ENCODE measurements at regions of chr10 and their contacts with region 1.

Region 1: DNA sequence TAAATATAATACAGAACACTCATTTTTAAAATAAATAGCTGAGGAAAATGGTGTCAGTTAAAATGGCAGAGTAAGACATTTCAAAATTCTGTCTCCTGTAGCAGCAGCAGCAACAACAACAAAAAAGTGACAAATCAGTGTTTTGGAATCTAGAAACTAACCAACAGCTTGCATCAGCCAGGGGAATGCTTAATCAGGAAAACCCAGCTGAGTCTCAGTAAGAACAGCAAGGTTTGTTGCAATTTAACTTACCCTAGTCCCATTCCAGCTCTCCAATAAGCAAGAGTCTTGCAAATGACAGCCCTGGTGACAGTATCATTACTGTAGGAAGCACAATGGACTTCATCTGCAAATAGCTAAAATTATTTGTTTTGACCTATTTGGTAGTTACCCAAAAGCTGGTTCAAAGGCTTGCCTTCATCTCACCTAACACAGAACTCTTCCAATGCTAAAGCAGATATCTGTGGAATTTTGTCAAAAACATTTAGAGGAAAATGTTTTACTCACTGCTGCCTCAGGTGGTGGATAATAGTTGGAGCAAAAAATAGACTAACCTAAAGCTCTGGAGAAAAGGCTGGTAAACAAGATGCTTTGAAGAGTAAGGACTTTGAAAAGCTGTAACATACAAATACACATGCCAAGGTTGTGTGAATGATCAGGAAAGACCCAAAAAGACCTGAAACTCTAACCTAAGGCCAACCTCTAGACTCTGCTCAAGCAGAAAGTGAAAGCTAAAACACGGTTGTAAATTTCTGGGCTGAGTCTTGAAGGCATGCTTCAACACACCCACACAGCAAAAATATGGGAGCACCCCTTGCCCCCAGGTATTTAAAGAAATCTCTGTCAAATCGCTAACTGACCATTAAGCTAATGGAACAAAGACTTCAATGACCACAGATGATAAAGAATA is 9.9 kb upstream of the ARHGAP22 start:
- DNase-seq: peak in 1 of 2 experiments; percentile 33
- H3K4me3 ChIP-seq: no peak overlapping the region
- H3K27ac ChIP-seq: no peak overlapping the region
- H3K4me1 ChIP-seq: no peaks in the 10 kb centered on the region
- H3K27me3 ChIP-seq: no peaks in the 10 kb centered on the region; a peak in 1 of 7 replicates
- CTCF ChIP-seq: peak in 1 of 3 experiments; percentile 29; a peak in 1 of 4 replicates
- EP300 ChIP-seq: no peak
- POLR2A ChIP-seq: no peak
- RAD21 ChIP-seq: peak in 1 of 2 experiments; percentile 9; a peak in 1 of 4 replicates

Region 2: GRCh38 chr10:48274636-48275035 is 340.1 kb before region 1 on chr10 and contains the start of gene FRMPD2:
- CTCF ChIA-PET with region 1: no interaction called
- POLR2A ChIA-PET with region 1: no interaction called
- DNase-seq: no peak
- H3K4me3 ChIP-seq: no peak within 1 kb of the TSS
- H3K27ac ChIP-seq: no peak within 1 kb of the TSS; the same call in 1 of the 2 replicates
- H3K4me1 ChIP-seq: peaks cover 0 to 7% (median 1%) of the 10 kb centered on the region in 4 experiments; a peak in 2 of 7 replicates
- H3K27me3 ChIP-seq: no peaks in the 10 kb centered on the region
- CTCF ChIP-seq: no peak
- EP300 ChIP-seq: no peak
- POLR2A ChIP-seq: no peak
- RAD21 ChIP-seq: no peak
- total RNA-seq, gene FRMPD2: 0.07 and 0.10 TPM in 2 replicates

Region 3: DNA sequence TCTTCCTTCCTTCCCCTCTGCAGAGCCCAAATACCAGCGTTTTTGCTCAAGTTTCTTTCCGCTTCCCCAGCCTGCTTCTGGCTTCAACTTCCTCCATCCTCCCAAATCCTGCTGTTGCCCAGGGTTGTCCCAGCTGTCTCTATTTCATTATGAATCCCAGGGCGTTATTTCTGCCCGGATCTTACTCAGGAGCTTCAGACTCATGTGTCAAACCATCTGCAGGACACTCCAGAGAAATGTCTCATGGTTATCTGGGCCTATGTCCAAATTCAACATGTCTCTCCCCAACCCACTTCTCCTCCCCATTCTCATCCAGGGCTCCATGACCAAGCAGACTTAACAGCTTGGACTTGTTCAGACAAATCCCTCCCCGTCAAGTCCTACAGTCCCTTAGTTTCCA is 25.5 kb before region 1 on chr10:
- CTCF ChIA-PET with region 1: interaction called, 172 read pairs
- POLR2A ChIA-PET with region 1: no interaction called
- DNase-seq: no peak
- H3K4me3 ChIP-seq: no peak overlapping the region
- H3K27ac ChIP-seq: no peak overlapping the region
- H3K4me1 ChIP-seq: peaks cover 0 to 4% (median 3%) of the 10 kb centered on the region in 4 experiments; a peak in 5 of 7 replicates
- H3K27me3 ChIP-seq: no peaks in the 10 kb centered on the region
- CTCF ChIP-seq: no peak
- EP300 ChIP-seq: no peak
- POLR2A ChIP-seq: no peak
- RAD21 ChIP-seq: no peak

Region 4: DNA sequence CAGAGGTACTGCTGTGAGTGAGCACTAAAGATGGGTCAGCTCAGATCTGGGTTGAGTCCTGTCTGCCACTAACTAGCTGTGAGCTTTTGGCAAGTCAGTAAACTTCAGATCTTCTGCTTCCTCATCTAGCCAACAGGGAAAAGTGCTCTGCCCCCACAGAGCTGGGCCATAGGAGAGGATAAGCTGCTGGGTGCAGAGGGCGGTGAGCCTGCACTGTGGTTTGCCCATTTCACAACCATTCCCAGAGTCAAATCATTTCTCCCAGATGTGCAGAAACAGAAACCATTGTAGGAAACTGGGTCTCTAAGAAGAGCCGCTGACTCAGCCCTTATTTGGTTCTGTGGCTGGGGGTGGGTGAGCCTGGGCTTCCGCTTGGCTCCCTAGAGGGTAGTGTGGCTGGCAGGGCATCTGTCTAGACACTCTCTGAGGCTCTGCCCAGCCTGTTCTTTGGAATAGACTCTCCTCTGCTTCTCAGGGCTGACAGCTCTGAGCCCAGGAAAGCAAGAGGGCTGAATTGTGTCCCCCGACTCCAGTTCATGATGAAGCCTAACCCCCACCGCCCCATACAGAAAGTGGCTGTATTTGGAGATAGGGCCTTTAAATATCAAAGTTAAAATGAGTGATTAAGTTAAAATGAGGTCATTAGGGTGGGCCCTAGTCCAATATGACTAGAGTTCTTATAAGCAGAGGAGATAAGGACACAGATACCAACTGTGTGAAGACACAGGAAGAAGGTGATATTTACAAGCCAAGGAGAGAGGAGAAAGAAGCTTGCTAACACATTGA is 19.7 kb after region 1 on chr10:
- CTCF ChIA-PET with region 1: interaction called, 15 read pairs
- POLR2A ChIA-PET with region 1: no interaction called
- DNase-seq: no peak
- H3K4me3 ChIP-seq: no peak overlapping the region
- H3K27ac ChIP-seq: no peak overlapping the region
- H3K4me1 ChIP-seq: no peaks in the 10 kb centered on the region
- H3K27me3 ChIP-seq: no peaks in the 10 kb centered on the region
- CTCF ChIP-seq: no peak
- EP300 ChIP-seq: no peak
- POLR2A ChIP-seq: no peak
- RAD21 ChIP-seq: no peak

Region 5: DNA sequence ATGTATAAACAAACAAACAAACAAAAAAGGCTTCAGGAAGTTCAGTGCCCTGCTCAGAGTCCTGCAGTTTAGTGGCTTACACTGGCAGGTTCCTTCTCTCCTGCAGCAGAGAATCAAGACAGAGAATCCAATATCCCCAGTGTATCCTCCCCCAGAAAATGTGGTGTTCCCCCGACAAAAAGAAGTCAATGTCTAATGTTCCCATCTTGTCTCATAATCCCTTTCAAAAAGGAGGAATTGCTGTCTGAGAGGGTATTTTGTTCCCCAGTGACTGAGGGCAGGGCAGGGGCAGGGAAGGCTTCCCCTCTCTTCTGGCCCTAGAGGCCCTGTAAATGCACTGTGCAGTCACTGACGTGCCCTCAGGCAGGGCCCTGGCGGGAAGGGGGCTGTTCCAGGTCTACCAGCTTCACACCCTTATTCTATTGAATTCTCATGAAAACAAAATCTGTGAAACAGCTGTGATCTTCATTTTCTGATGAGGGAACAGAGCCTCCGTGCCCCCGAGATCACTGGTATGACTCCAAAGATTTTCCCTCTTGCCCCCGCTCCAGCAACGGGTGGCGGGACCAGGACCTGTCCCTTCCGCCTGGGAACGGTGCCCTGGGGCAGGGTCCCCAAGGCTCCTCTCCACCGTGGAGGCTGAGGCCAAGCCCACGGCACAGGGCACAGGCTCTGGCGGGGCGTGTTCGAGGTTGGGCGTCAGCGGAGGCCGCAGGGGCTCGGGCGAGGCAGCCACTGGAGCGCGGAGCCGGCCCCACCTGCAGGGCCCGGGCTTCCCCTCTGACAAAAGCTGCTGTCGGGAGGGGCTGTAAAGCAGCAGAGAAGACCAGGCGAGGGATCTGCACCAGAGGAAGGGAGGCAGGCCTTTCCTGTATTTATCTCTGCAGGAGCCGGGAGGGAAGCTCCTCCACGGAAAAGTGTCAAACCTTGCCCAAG is 56.5 kb after region 1 on chr10:
- CTCF ChIA-PET with region 1: no interaction called
- POLR2A ChIA-PET with region 1: no interaction called
- DNase-seq: peak in 1 of 2 experiments; percentile 63
- H3K4me3 ChIP-seq: peak overlapping the region in 2 of 4 experiments; percentile 23 to 42; a peak in 4 of 8 replicates
- H3K27ac ChIP-seq: no peak overlapping the region
- H3K4me1 ChIP-seq: peaks cover 0 to 5% (median 2%) of the 10 kb centered on the region in 4 experiments; a peak in 4 of 7 replicates
- H3K27me3 ChIP-seq: no peaks in the 10 kb centered on the region; a peak in 2 of 7 replicates
- CTCF ChIP-seq: no peak
- EP300 ChIP-seq: no peak
- POLR2A ChIP-seq: no peak
- RAD21 ChIP-seq: no peak

Region 6: DNA sequence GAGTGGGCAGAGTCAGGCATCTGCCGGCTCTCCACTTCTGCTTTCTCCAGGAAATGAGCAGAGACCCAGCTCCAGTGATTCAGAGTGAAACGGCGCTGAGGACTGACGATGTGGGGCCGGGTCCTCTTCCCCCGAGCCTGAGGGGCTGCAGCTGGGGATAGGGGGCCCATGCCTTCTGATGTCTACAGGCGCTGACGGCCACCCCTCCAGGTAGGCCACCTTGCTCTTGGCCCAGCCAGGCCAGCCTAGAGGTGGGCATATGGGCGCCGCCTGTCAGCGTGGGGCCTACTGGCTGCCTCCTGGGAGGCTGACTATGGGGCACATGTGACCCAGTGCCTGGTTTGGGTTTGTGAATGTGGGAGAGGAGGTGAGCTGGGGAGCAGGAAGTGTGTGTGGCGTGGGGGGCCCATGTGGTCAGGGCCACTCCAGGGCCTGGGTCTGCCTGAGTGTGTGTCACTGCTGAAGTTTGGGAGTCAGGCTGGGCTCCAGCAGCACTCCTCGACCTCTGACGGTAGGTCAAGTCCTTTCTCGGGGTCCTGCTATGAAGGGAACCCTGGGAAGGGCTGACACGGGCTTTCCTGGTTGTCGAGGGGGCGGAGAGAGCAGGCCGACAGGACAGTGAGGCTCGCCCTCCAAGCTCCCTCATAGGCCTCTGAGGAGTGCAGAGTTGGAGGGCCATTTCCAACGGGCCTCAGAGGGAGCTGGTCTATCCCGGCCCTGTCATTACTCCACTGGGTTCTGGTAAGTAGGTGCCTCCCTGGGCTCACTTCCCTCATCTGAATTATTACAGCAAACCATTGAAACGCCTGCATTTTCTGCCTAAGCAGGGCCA is 70.3 kb after region 1 on chr10 and contains the start of gene WDFY4:
- CTCF ChIA-PET with region 1: no interaction called
- POLR2A ChIA-PET with region 1: no interaction called
- DNase-seq: peak in 1 of 2 experiments; percentile 37
- H3K4me3 ChIP-seq: no peak within 1 kb of the TSS
- H3K27ac ChIP-seq: no peak within 1 kb of the TSS
- H3K4me1 ChIP-seq: no peaks in the 10 kb centered on the region
- H3K27me3 ChIP-seq: no peaks in the 10 kb centered on the region
- CTCF ChIP-seq: no peak
- EP300 ChIP-seq: no peak
- POLR2A ChIP-seq: no peak
- RAD21 ChIP-seq: no peak
- total RNA-seq, gene WDFY4: not detected in 2 replicates

Region 7: DNA sequence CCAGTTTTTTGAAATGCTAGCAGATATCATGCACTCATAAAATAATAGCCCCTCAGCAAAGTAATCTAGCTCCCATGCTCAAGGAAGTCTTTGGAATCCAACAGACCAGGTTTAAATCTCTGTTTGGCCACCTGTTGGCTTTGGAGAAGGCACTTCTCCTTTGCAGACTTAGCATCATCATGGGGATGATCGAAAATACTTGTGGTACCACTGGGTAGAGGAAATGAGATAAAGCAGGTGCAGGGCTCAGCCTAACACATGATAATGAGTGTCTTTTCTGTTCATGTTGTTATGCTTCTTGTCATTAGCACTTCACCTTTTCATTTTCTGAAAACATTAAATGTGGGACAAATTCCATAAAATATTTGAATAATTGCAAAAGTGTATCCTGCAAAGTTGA is 257.5 kb after region 1 on chr10:
- CTCF ChIA-PET with region 1: no interaction called
- POLR2A ChIA-PET with region 1: no interaction called
- DNase-seq: no peak
- H3K4me3 ChIP-seq: no peak overlapping the region
- H3K27ac ChIP-seq: no peak overlapping the region
- H3K4me1 ChIP-seq: no peaks in the 10 kb centered on the region
- H3K27me3 ChIP-seq: no peaks in the 10 kb centered on the region
- CTCF ChIP-seq: no peak
- EP300 ChIP-seq: no peak
- POLR2A ChIP-seq: no peak
- RAD21 ChIP-seq: no peak

Measured in H1 (cell line).